Common myeloid progenitor, CD34-positive (primary cell): ENCODE measurements at regions of chr11 and their contacts with region 1.

Region 1: GRCh38 chr11:63945477-63946163 is 6.8 kb downstream of the NAA40 start:
- DNase-seq: peak in 2 of 3 donors; percentile 64 to 69
- H3K4me3 ChIP-seq: no peak overlapping the region
- H3K27ac ChIP-seq: no peak overlapping the region
- H3K4me1 ChIP-seq: peaks cover 1 to 8% (median 6%) of the 10 kb centered on the region in 4 experiments
- H3K27me3 ChIP-seq: no peaks in the 10 kb centered on the region

Region 2: GRCh38 chr11:63768237-63769043 is 177.2 kb before region 1 on chr11 and contains the start of gene ZFTA:
- CTCF ChIA-PET with region 1: interaction called, 13 read pairs
- POLR2A ChIA-PET with region 1: interaction called, 4 read pairs
- DNase-seq: peak; percentile 52 to 77 (median 72)
- H3K4me3 ChIP-seq: peak within 1 kb of the TSS; percentile 77 to 93 (median 87)
- H3K27ac ChIP-seq: peak within 1 kb of the TSS; percentile 40 to 81
- H3K4me1 ChIP-seq: peaks cover 0 to 31% (median 26%) of the 10 kb centered on the region in 4 experiments
- H3K27me3 ChIP-seq: peaks cover 0 to 29% (median 16%) of the 10 kb centered on the region in 5 experiments

Region 3: GRCh38 chr11:63826471-63827190 is 119.0 kb before region 1 on chr11:
- CTCF ChIA-PET with region 1: interaction called, 15 read pairs
- POLR2A ChIA-PET with region 1: no interaction called
- DNase-seq: no peak
- H3K4me3 ChIP-seq: no peak overlapping the region
- H3K27ac ChIP-seq: no peak overlapping the region
- H3K4me1 ChIP-seq: no peaks in the 10 kb centered on the region
- H3K27me3 ChIP-seq: no peaks in the 10 kb centered on the region

Region 4: DNA sequence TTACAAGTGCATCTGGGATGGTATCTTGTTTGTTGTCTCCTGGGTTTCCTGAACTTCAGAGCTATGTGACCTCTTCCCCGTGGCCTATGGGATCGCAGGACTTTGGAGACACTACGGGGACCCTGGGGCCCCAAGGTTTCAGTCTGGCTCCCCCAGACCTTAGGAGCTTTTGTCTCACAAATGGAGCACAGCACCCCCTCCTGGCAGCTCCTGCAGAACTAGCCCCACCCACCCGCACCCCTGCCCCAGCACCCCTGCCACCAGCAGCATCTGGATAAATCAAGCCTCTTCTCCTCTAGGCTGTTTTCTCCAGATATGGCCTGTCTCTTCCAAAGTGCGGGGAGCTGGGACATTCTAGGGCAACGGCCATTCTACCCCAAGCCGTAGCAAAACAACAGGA is 39.0 kb before region 1 on chr11:
- CTCF ChIA-PET with region 1: interaction called, 17 read pairs
- POLR2A ChIA-PET with region 1: no interaction called
- DNase-seq: peak; percentile 51 to 71 (median 67)
- H3K4me3 ChIP-seq: no peak overlapping the region
- H3K27ac ChIP-seq: no peak overlapping the region
- H3K4me1 ChIP-seq: peaks cover 0 to 37% (median 21%) of the 10 kb centered on the region in 4 experiments
- H3K27me3 ChIP-seq: no peaks in the 10 kb centered on the region

Region 5: DNA sequence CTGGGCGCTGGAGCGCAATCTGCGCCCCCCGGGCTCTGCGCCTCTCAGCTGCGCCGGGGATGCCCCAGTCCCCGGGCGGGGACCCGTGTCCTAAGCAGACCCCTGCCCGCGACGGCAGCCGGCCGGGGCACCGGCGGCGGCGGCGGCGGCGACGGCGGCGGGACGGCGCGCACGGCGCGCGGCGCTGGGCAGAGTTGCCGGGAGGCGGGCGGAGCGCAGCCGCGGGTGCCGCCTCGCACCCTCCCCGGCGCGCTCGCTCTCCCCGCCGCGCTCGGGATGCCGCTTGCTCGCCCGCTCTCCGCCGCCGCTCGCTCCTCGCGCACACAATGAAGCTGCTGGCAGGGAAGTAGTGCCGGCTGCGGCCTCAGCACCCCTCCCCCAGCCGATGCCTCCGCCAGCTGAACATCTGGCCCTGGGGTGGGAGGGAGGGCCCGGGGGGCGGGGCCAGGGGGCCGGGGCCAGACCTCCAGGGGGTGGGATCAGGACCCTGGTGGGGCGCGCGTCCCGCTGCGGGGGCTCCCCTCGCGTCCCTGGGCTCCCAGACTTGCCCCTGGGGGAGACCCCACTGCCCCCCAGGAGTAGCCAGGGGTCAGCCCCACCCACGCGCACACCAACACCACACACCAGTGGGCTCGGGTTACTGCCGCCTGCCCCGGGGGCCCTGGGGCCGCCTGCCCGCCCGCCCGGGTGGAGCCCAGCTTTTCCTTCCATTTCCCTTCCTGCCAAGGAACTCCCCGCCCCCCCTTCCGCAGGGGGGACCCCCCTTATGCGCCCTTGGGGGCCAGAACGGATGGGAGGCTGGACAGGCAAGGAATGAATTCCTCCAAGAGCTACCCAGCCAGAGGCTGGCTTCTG is 28.6 kb before region 1 on chr11 and contains the start of gene RCOR2:
- CTCF ChIA-PET with region 1: interaction called, 15 read pairs
- POLR2A ChIA-PET with region 1: no interaction called
- DNase-seq: peak; percentile 82 to 88 (median 86)
- H3K4me3 ChIP-seq: peak within 1 kb of the TSS; percentile 26 to 74 (median 61)
- H3K27ac ChIP-seq: no peak within 1 kb of the TSS
- H3K4me1 ChIP-seq: peaks cover 0 to 50% (median 40%) of the 10 kb centered on the region in 4 experiments
- H3K27me3 ChIP-seq: peaks cover 0 to 22% (median 0%) of the 10 kb centered on the region in 5 experiments

Region 6: DNA sequence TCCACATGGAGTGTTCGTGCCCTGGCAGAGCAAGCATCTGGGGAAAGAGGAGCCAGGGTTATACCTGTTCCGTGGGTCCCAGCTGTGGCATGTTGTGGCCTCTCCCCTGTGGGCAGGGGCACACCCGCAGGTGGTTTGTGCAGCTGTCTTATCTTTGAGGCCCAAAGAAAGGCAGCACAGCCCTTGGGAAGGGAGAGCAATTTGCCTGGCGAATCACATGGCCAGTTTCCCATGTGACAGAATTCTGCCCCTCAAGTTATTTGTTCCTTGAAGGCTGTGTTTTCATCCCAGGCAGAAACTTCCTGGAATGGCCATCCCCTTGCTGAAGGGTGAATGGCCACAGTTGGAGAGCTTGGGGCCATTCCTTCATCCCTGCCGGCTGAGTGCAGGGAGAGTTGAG is 12.4 kb after region 1 on chr11:
- CTCF ChIA-PET with region 1: interaction called, 13 read pairs
- POLR2A ChIA-PET with region 1: no interaction called
- DNase-seq: no peak
- H3K4me3 ChIP-seq: no peak overlapping the region
- H3K27ac ChIP-seq: no peak overlapping the region
- H3K4me1 ChIP-seq: peaks cover 0 to 5% (median 0%) of the 10 kb centered on the region in 4 experiments
- H3K27me3 ChIP-seq: no peaks in the 10 kb centered on the region